Esophagus muscularis mucosa (tissue), 4 donors: ENCODE measurements at regions of chr6 and their contacts with region 1.

Region 1: GRCh38 chr6:30719791-30720737 is at the start of gene TUBB:
- DNase-seq: peak; percentile 99
- H3K4me3 ChIP-seq: peak within 1 kb of the TSS; percentile 82 to 93 (median 86)
- H3K27ac ChIP-seq: peak within 1 kb of the TSS; percentile 94 to 98 (median 97)
- H3K4me1 ChIP-seq: peaks cover 50 to 70% (median 65%) of the 10 kb centered on the region in 4 donors
- H3K27me3 ChIP-seq: no peaks in the 10 kb centered on the region
- CTCF ChIP-seq: peak in 2 of 3 experiments; percentile 21 to 22
- EP300 ChIP-seq: no peak
- POLR2A ChIP-seq: peak; percentile 91
- total RNA-seq, gene TUBB: 208 to 398 (median 272) TPM

Region 2: GRCh38 chr6:29933955-29934354 is 786.1 kb before region 1 on chr6:
- intact Hi-C with region 1: no loop called
- DNase-seq: no peak
- H3K4me3 ChIP-seq: no peak overlapping the region
- H3K27ac ChIP-seq: no peak overlapping the region
- H3K4me1 ChIP-seq: no peaks in the 10 kb centered on the region
- H3K27me3 ChIP-seq: no peaks in the 10 kb centered on the region
- CTCF ChIP-seq: no peak
- EP300 ChIP-seq: no peak
- POLR2A ChIP-seq: no peak

Region 3: DNA sequence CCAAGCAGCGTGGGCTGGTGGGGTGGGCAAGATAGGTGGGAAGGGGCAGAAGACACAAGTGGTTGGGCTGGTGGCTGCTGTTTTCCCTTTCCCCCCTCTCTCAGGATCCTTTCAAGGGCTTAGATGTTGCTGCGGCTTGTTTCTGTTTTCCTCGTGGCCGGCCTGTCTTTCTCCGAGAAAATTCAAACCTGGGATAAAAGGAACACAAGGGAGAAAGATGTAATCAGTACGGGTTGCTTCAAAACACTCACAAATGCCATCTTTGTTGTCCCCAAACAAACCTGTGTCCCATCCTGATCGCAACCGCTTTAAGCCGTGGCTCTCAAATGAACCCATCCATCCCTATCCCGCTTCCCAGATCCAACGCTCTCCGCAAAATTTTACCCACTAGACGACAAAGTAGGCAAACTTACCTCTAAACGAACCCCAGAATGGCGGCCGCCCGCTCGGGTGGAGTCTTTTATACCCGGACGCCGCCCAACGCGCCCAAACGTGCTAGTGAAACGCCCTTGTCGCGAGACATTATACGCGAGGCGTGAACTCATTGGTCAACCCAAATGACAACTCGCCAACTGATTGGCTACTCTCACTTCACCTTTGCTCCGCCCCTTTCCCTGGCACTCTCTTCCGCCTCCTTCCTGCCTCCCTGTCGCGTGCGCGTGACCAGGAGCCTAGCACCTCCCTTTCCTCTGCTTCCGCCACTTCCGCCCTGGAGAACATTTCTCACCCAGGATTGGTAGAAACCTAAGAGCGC is 103.1 kb before region 1 on chr6 and contains the start of gene PPP1R10:
- intact Hi-C with region 1: loop called (anchors 2 kb)
- DNase-seq: peak; percentile 100
- H3K4me3 ChIP-seq: peak within 1 kb of the TSS; percentile 68 to 91 (median 76)
- H3K27ac ChIP-seq: peak within 1 kb of the TSS; percentile 90 to 98 (median 96)
- H3K4me1 ChIP-seq: peaks cover 38 to 48% (median 44%) of the 10 kb centered on the region in 4 donors
- H3K27me3 ChIP-seq: no peaks in the 10 kb centered on the region
- CTCF ChIP-seq: no peak
- EP300 ChIP-seq: no peak
- POLR2A ChIP-seq: peak; percentile 99
- total RNA-seq, gene PPP1R10: 24.5 to 53.6 (median 37.9) TPM

Region 4: DNA sequence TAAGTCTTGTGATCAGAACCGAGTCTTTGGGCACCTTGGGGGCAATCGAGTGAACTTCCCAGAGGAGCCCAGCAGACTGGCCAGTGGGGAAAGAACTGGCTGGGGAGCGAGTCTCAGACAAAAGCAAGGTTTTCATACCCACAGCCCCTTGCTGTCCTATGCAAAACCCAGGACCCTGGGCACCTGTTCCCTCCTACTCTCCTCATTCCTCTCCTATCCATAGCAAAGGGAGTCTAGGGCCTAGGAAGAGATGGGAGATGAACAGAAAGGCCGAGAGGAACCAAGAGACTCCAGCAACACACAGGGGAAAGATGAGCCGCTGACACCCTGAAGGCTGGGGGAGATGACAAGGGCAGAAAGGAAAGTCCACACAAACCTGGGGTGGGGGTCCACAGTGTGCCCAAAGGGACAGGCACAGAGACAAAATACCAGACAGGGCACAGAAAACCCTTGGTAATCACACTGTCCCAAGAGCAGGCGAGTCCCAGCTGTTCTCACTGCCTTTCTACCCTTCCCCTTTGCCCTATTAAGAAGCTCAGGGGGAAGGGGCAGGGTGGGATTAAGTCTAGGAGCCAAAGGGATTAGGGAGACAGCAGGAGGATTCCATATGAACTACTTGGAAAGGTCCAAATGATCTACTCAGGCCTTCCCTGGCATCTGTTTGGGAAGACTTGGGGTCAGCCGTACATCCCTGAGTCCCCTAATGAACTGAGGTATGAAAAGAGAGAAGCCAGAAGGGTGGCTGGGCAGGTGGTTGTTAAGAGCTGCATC is 40.1 kb before region 1 on chr6:
- intact Hi-C with region 1: loop called (anchors 1 kb)
- DNase-seq: no peak
- H3K4me3 ChIP-seq: peak overlapping the region; percentile 42 to 85 (median 72)
- H3K27ac ChIP-seq: peak overlapping the region; percentile 95 to 99 (median 97)
- H3K4me1 ChIP-seq: peaks cover 55 to 69% (median 68%) of the 10 kb centered on the region in 4 donors
- H3K27me3 ChIP-seq: no peaks in the 10 kb centered on the region
- CTCF ChIP-seq: no peak
- EP300 ChIP-seq: no peak
- POLR2A ChIP-seq: no peak